Naive thymus-derived CD8-positive, alpha-beta T cell (primary cell): ENCODE measurements at regions of chr17 and their contacts with region 1.

Region 1: DNA sequence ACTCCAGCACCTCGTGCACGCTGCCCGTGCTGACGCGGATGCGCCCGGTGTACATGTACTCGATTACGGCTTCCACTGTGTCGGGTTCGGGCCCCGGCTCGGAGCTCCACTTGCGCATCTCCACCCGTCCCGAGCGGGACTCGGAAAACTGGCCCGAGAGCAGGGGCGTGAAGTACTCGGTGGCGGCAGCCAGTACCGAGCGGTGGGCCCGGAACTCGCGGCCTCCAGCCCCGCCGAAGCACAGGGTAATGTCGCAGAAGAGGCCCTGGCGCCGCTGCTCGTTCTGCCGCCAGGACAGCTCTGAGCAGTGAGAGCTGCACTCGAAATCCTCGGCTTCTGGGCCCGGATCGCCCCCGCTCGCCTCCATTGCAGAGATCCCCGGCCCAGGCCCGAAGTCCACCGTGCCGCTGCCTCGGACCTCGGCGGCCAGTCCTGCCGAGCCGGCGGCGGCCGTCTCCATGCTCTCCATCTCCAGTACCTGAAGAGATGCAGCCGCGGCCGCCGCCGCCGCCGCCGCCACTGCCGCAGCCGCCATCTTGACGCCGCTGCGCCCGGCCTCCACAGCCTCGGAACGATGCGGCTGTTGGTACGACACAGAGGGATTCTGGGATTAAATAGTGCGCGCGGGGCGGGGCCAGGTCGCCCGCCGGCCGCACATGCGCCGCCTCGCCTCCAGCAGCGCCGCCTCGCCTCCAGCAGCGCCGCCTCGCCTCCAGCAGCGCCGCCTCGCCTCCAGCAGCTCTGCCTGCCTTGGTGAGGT is at the start of gene KLHL11:
- DNase-seq: peak; percentile 79 to 91 (median 84)
- ATAC-seq: peak; percentile 90
- H3K4me3 Mint-ChIP-seq: no peak within 1 kb of the TSS
- H3K27ac Mint-ChIP-seq: peak within 1 kb of the TSS in 4 of 10 donors; percentile 49 to 91 (median 90)
- H3K4me1 Mint-ChIP-seq: peaks cover 13 to 26% (median 22%) of the 10 kb centered on the region in 4 donors
- H3K27me3 Mint-ChIP-seq: no peaks in the 10 kb centered on the region
- polyA plus RNA-seq, gene KLHL11: 5.0 to 6.3 (median 5.4) TPM

Region 2: GRCh38 chr17:41811549-41812380 is 53.3 kb before region 1 on chr17 and contains the start of gene P3H4:
- POLR2A ChIA-PET with region 1: interaction called, 10 read pairs
- DNase-seq: peak; percentile 57 to 83 (median 75)
- ATAC-seq: peak; percentile 91 to 92
- H3K4me3 Mint-ChIP-seq: peak within 1 kb of the TSS; percentile 87 to 97 (median 93)
- H3K27ac Mint-ChIP-seq: peak within 1 kb of the TSS; percentile 15 to 95 (median 83)
- H3K4me1 Mint-ChIP-seq: peaks cover 17 to 26% (median 24%) of the 10 kb centered on the region in 4 donors
- H3K27me3 Mint-ChIP-seq: peaks cover 0 to 4% (median 0%) of the 10 kb centered on the region in 5 donors
- polyA plus RNA-seq, gene P3H4: 4.0 to 6.2 (median 5.8) TPM

Region 3: GRCh38 chr17:41835800-41836549 is 29.0 kb before region 1 on chr17 and contains the start of gene NT5C3B:
- POLR2A ChIA-PET with region 1: interaction called, 18 read pairs
- DNase-seq: peak; percentile 25 to 75 (median 58)
- ATAC-seq: peak; percentile 82 to 88
- H3K4me3 Mint-ChIP-seq: peak within 1 kb of the TSS; percentile 80 to 94 (median 86)
- H3K27ac Mint-ChIP-seq: peak within 1 kb of the TSS; percentile 55 to 95 (median 82)
- H3K4me1 Mint-ChIP-seq: peaks cover 8 to 26% (median 14%) of the 10 kb centered on the region in 4 donors
- H3K27me3 Mint-ChIP-seq: peaks cover 0 to 1% (median 0%) of the 10 kb centered on the region in 5 donors
- polyA plus RNA-seq, gene NT5C3B: 38.4 to 64.7 (median 41.5) TPM

Region 4: GRCh38 chr17:41885733-41886132 is 20.7 kb after region 1 on chr17:
- POLR2A ChIA-PET with region 1: interaction called, 12 read pairs
- DNase-seq: no peak
- ATAC-seq: no peak
- H3K4me3 Mint-ChIP-seq: no peak overlapping the region
- H3K27ac Mint-ChIP-seq: peak overlapping the region in 2 of 10 donors; percentile 17 to 69
- H3K4me1 Mint-ChIP-seq: peaks cover 0 to 7% (median 0%) of the 10 kb centered on the region in 4 donors
- H3K27me3 Mint-ChIP-seq: no peaks in the 10 kb centered on the region

Region 5: GRCh38 chr17:41901646-41902045 is 36.6 kb after region 1 on chr17:
- POLR2A ChIA-PET with region 1: no interaction called
- DNase-seq: no peak
- ATAC-seq: no peak
- H3K4me3 Mint-ChIP-seq: no peak overlapping the region
- H3K27ac Mint-ChIP-seq: peak overlapping the region in 2 of 10 donors; percentile 37 to 40
- H3K4me1 Mint-ChIP-seq: peaks cover 0 to 4% (median 0%) of the 10 kb centered on the region in 4 donors
- H3K27me3 Mint-ChIP-seq: no peaks in the 10 kb centered on the region

Region 6: DNA sequence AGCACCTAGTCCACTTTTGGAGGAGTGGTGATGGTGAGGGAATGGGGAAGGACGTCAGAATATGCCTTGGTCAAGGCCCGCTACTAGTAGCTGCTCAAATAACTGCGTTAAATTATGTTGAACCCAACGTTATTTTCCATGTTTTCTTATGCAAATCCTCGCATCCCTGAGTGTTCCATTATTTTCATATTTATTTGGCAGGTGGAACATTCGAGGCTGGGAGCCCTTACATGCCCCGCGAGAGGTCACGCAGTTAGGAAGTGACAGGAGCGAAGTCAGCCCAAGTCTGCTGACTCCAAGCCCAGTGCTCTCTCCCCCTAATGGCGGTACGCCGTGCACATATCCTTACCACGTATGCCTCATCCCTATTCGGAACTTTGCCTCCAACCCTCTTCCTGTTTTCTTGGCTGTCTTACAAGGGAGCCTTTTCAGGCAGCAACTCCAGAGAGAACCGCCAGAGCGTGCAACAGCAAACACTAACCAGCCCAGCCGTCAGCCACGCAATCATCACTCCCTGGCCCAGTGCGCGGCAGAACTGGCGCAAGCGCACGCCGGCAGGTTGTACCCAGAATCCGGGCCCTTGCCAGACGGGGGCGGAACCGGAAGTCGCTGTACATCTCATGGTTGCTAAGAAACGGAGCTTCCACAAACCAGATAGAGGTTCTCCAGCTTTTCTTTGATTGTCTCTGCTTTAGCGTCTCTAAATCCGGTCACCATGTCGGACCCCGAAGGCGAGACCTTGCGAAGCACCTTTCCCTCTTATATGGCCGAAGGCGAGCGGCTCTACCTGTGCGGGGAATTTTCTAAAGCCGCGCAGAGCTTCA is 65.2 kb after region 1 on chr17 and contains the start of gene ODAD4:
- POLR2A ChIA-PET with region 1: interaction called, 11 read pairs
- DNase-seq: peak; percentile 92 to 97 (median 96)
- ATAC-seq: peak; percentile 97 to 98
- H3K4me3 Mint-ChIP-seq: peak within 1 kb of the TSS; percentile 91 to 98 (median 96)
- H3K27ac Mint-ChIP-seq: peak within 1 kb of the TSS; percentile 95 to 99 (median 98)
- H3K4me1 Mint-ChIP-seq: peaks cover 14 to 28% (median 26%) of the 10 kb centered on the region in 4 donors
- H3K27me3 Mint-ChIP-seq: no peaks in the 10 kb centered on the region
- polyA plus RNA-seq, gene ODAD4: 0.08 to 0.09 TPM in 2 of 3 donors, not detected in the other

Region 7: GRCh38 chr17:41966463-41967140 is 101.6 kb after region 1 on chr17 and contains the start of gene CNP:
- POLR2A ChIA-PET with region 1: interaction called, 14 read pairs
- DNase-seq: peak; percentile 82 to 96 (median 90)
- ATAC-seq: peak; percentile 82
- H3K4me3 Mint-ChIP-seq: peak within 1 kb of the TSS; percentile 80 to 94 (median 88)
- H3K27ac Mint-ChIP-seq: peak within 1 kb of the TSS; percentile 82 to 97 (median 93)
- H3K4me1 Mint-ChIP-seq: peaks cover 14 to 51% (median 49%) of the 10 kb centered on the region in 4 donors
- H3K27me3 Mint-ChIP-seq: no peaks in the 10 kb centered on the region
- polyA plus RNA-seq, gene CNP: 27.0 to 33.6 (median 27.5) TPM